HCT116 (cell line): ENCODE measurements at regions of chr5 and their contacts with region 1.

Region 1: GRCh38 chr5:86880785-86881492 is 263.2 kb downstream of the COX7C start:
- DNase-seq: peak; percentile 81
- ATAC-seq: peak; percentile 97
- H3K4me3 ChIP-seq: no peak overlapping the region
- H3K27ac ChIP-seq: no peak overlapping the region
- H3K4me1 ChIP-seq: no peaks in the 10 kb centered on the region
- H3K27me3 ChIP-seq: no peaks in the 10 kb centered on the region
- CTCF ChIP-seq: peak; percentile 89 to 97 (median 93)
- POLR2A ChIP-seq: no peak
- RAD21 ChIP-seq: peak; percentile 88

Region 2: DNA sequence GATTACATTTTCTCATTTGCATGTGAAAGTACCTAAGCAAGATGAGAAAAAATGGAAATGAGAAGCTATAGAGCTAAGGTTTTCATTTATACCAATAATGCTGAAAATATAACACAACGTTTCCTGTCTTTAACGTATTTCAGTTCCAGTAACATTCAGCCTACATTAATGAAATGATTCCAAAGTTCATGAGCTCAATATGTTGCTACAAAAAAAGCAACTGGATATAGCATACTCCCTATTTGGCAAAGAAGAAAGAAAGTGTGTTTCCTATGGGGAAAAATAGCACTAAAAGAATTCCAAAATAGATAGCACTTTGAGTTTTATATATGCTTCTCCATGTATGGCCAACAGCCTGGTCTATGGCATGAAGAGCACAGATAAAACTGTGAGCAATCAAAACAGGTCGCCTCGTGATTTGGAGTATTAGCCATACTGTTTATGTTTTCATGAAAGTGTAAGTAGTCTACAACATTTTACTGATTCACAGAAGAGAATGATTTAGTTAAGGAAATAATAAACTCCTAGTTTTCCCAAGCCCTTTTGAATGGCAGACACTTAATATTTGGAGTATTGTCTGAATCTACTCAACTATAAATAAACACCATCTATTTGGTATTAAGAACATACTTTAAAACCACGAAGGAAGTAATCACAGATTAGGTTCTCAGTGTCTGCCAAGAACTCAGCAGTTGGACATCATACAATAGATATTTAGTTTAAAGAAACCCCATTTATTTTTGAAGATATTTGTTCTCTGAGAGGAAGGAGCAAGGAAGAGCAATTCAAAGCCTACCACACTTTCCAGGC is 128.0 kb after region 1 on chr5:
- CTCF ChIA-PET with region 1: interaction called, 6 read pairs
- POLR2A ChIA-PET with region 1: no interaction called
- RAD21 ChIA-PET with region 1: no interaction called
- intact Hi-C with region 1: loop called (anchors 1 kb)
- DNase-seq: no peak
- ATAC-seq: no peak
- H3K4me3 ChIP-seq: no peak overlapping the region
- H3K27ac ChIP-seq: no peak overlapping the region
- H3K4me1 ChIP-seq: no peaks in the 10 kb centered on the region
- H3K27me3 ChIP-seq: no peaks in the 10 kb centered on the region
- CTCF ChIP-seq: no peak
- POLR2A ChIP-seq: no peak
- RAD21 ChIP-seq: no peak